HepG2 (cell line): ENCODE measurements at regions of chr2 and their contacts with region 1.

Region 1: DNA sequence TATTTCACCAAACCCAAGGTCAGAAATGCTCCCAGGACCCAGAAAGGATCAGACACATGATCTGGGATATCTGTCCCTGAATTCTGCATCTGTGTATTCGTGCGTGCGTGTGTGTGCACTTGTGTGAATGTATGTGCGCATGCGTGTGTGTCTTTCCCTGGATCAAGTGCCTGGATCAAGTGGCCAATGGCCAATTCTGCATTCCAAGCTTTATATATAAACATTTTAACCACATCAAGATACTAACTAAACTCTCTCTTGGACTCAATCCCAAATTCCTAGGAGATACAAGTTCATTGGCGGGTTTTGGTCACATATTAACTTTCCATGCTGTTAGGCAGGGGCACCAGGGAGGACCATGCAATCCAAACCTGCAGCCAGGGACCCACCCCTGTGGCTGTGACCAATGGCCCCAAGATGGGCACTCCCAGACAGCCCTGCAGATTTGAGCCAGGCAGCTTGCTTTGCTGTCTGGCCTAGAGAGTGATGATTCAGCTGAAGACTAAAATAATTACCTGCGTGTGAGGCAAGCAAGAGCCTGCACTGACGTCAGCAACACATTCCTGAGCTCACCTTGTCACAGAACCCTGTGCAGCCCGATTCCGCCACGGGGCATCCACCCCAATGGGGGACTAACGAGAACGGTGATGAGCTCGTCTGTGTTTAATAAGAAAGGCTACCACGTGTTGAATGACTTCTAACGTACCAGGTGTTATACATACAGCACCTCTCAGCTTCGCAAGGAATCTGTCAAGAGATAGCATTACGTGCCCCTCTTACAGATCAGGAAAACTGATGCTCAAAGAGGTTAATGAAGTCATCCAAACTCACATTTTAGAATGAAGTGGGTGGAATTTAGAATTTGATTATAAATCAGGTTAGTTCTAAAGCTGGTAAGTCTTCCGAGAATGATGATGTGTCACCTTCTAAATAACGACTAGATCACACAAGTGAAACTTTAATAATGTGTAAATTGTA is 45.4 kb upstream of the ROCK2 start:
- DNase-seq: peak; percentile 93
- ATAC-seq: peak; percentile 65
- H3K4me3 ChIP-seq: peak overlapping the region in 2 of 3 experiments; percentile 33 to 61; a peak in 3 of 6 replicates
- H3K27ac ChIP-seq: no peak overlapping the region
- H3K4me1 ChIP-seq: peaks cover 79% of the 10 kb centered on the region
- H3K27me3 ChIP-seq: no peaks in the 10 kb centered on the region
- CTCF ChIP-seq: no peak
- EP300 ChIP-seq: peak in 1 of 2 experiments; percentile 49; a peak in 1 of 4 replicates
- POLR2A ChIP-seq: no peak
- RAD21 ChIP-seq: no peak

Region 2: GRCh38 chr2:10798783-10799182 is 591.1 kb before region 1 on chr2:
- CTCF ChIA-PET with region 1: no interaction called
- POLR2A ChIA-PET with region 1: no interaction called
- in situ Hi-C with region 1: no loop called
- intact Hi-C with region 1: no loop called
- DNase-seq: no peak
- ATAC-seq: peak; percentile 70; the same call in 2 of the 3 replicates
- H3K4me3 ChIP-seq: no peak overlapping the region
- H3K27ac ChIP-seq: no peak overlapping the region
- H3K4me1 ChIP-seq: no peaks in the 10 kb centered on the region
- H3K27me3 ChIP-seq: no peaks in the 10 kb centered on the region; a peak in 1 of 5 replicates
- CTCF ChIP-seq: peak; percentile 37; the same call in 1 of the 2 replicates
- EP300 ChIP-seq: no peak
- POLR2A ChIP-seq: no peak
- RAD21 ChIP-seq: no peak

Region 3: DNA sequence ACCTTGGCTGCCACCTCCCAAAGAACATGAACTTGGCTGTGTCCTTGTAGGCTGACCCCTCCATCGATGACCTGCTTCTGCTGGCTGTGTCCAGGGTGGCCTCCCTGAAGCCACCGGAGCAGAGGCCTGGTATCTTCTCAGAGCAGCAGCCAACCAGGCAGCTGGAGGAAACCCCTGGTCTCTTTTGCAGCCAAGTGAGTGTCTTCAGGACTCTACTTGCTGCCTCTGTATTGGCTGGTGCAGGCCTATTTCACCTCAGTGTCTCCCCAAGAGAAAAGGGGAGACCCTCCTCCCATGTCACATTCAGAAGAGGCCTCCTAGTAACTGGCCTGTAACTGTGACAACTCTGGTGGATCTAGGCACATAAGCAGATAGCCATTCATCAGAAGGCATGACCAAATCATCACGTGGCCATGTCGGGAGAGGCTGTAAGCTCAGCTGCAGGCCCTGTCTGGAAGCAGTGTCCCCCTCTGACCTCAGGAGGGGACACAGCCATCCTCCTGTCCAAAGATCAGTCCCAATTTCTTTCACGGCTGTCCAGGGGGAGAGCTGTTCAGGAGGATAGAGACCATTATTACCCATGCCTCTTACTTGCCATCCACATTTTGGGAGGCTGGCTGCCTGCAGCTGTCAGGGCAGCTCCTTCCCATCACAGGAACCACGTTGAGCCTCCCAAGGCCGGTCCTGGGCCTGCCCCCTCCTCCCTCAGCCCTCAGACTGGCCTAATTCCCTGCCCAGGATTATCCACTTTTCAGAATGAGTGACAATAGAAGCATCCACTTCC is 24.6 kb before region 1 on chr2:
- CTCF ChIA-PET with region 1: no interaction called
- POLR2A ChIA-PET with region 1: interaction called, 36 read pairs
- in situ Hi-C with region 1: no loop called
- intact Hi-C with region 1: no loop called
- DNase-seq: peak; percentile 93
- ATAC-seq: peak; percentile 80
- H3K4me3 ChIP-seq: peak overlapping the region; percentile 57 to 70 (median 63)
- H3K27ac ChIP-seq: peak overlapping the region; percentile 86
- H3K4me1 ChIP-seq: peaks cover 86% of the 10 kb centered on the region
- H3K27me3 ChIP-seq: no peaks in the 10 kb centered on the region; a peak in 1 of 5 replicates
- CTCF ChIP-seq: no peak
- EP300 ChIP-seq: peak; percentile 25 to 40; a peak in 2 of 4 replicates
- POLR2A ChIP-seq: peak; percentile 84 to 95
- RAD21 ChIP-seq: peak; percentile 57

Region 4: DNA sequence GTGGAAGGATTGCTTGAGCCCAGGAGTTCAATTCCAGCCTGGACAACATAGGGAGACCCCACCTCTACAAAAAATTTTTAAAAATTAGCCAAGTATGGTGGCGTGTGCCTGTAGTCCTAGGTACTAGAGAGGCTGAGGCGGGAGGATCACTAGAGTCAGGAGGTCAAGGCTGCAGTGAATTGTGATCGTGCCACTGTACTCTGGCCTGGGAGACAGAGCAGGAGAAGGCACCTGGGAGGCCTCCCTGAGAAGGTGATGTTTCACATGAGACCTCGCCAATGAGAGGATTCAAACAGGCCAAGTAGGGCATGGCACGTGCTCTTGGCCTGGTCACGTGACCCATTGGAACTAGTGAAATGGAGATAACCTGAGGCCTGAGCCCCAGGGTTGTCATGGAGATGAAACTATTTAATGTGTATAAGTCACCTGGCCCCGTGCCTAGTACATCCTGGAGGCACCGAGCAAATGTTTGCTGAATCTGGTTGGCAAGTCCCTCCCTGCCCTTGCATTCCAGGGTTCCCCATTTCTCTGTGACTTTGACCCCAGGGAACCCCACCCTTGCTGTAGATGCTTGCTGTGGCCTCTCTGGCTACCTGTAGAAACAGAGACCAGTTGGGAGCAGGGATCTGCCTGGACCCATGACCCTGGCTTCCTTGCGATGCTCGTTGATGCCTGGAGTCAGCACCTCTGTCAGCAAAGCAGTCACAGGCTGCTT is 19.3 kb before region 1 on chr2:
- CTCF ChIA-PET with region 1: no interaction called
- POLR2A ChIA-PET with region 1: interaction called, 99 read pairs
- in situ Hi-C with region 1: no loop called
- intact Hi-C with region 1: no loop called
- DNase-seq: peak; percentile 99
- ATAC-seq: peak; percentile 75
- H3K4me3 ChIP-seq: peak overlapping the region in 1 of 3 experiments; percentile 8; a peak in 1 of 6 replicates
- H3K27ac ChIP-seq: peak overlapping the region; percentile 58
- H3K4me1 ChIP-seq: peaks cover 100% of the 10 kb centered on the region
- H3K27me3 ChIP-seq: no peaks in the 10 kb centered on the region
- CTCF ChIP-seq: no peak
- EP300 ChIP-seq: peak; percentile 83; a peak in 3 of 4 replicates
- POLR2A ChIP-seq: no peak; a peak in 1 of 4 replicates
- RAD21 ChIP-seq: peak; percentile 41

Region 5: DNA sequence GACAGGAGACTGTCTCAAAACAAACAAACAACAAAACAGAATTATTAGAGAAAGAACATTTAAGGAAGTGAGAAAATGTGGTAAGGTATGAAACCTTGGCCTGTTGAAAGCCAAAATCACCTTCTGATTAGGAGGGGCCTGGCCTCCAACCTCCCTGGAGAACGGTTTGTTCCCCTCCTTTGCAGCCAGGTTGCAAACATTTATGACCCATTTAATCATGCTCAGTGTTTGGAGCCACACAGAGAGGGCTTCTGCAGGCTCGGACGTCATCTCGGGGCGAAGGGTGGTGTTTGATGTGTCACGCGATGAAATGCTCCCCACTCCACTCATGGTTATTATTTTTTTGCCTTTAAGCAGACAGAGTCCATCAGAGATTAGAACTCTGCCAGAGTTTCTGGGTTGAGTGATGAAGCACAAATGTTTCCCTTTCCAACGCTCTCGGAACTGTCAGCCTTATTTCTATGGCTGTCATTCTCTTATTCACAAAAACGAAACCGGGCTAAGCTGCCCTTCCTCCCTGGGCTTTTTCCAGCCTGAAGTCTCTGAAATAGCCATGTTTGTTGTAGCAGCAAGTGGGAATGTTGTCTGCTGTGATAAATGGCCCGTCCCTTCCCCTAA is 11.8 kb before region 1 on chr2:
- CTCF ChIA-PET with region 1: no interaction called
- POLR2A ChIA-PET with region 1: interaction called, 99 read pairs
- in situ Hi-C with region 1: no loop called
- intact Hi-C with region 1: loop called (anchors 1 kb)
- DNase-seq: no peak
- ATAC-seq: no peak
- H3K4me3 ChIP-seq: no peak overlapping the region
- H3K27ac ChIP-seq: no peak overlapping the region
- H3K4me1 ChIP-seq: peaks cover 90% of the 10 kb centered on the region
- H3K27me3 ChIP-seq: no peaks in the 10 kb centered on the region
- CTCF ChIP-seq: no peak
- EP300 ChIP-seq: no peak
- POLR2A ChIP-seq: no peak
- RAD21 ChIP-seq: no peak

Region 6: DNA sequence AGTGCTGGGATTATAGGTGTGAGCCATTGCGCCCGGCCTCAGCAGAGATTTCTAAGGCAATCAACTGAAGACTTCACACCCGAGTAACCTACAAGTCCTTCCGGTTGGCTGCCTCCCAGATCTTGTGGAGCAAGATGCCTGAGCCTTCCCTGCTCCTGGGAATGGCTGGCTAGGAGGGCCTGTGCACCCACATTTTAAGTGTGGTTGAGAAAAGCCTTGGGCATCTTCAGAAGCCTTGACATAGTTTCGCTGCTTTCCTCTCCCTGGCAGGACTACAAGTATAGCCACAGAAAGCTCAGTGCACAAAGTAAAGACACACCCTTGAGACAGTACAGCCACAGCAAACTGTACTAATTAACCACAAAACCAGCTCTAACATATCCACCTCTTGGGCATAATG is 40.9 kb after region 1 on chr2:
- CTCF ChIA-PET with region 1: no interaction called
- POLR2A ChIA-PET with region 1: no interaction called
- in situ Hi-C with region 1: no loop called
- intact Hi-C with region 1: no loop called
- DNase-seq: no peak
- ATAC-seq: no peak; the same call in 1 of the 3 replicates
- H3K4me3 ChIP-seq: no peak overlapping the region
- H3K27ac ChIP-seq: no peak overlapping the region
- H3K4me1 ChIP-seq: no peaks in the 10 kb centered on the region
- H3K27me3 ChIP-seq: no peaks in the 10 kb centered on the region
- CTCF ChIP-seq: no peak
- EP300 ChIP-seq: no peak
- POLR2A ChIP-seq: no peak
- RAD21 ChIP-seq: no peak